ENCODE measurements at regions of chr2 and their contacts with region 1.

Region 1: DNA sequence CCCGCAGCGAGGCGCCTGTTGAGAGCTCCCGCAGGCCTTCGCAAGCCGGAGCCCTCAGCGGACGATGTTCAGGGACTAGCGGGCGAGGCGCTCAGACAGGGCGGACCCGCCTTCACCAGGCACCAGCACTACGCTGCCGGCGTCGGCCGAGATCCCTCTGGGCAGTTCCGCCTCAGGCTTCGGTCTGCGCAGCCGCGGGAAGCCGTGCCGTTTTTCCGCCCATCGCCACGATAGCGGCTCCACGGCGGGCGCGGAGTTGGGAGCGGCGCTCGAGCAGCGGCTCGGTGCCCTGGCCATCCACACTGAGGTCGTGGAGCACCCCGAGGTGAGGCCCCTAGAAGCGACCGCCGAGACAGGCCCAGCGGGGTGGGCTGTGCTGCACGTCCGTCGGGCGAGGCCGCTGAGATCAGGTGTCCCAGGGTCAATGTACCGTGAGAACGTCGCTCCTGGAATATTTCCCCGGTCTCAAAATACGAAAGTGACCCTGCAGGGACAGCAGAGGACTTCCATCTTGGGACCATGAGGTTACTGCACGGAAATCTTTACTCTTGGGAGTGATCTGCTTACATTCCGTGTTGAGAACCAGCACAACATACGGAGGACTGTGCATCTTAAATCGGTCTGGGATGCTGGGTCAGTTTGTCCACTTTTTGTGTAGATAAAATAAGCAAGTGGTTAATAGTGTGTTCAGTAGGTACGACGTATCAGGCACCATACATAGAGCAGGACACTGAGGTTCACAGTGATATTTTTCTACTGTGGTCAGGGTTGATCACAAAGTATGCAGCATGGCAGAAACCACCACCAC is 13.3 kb upstream of the MTIF2 start:
- DNase-seq: peak; percentile 77 to 93 (median 86)
- ATAC-seq: peak; percentile 98
- H3K4me3 ChIP-seq: peak overlapping the region; percentile 81
- H3K4me3 Mint-ChIP-seq: peak overlapping the region; percentile 96
- H3K27ac ChIP-seq: peak overlapping the region; percentile 78 to 88
- H3K27ac Mint-ChIP-seq: peak overlapping the region; percentile 97
- H3K4me1 ChIP-seq: peaks cover 11% of the 10 kb centered on the region
- H3K4me1 Mint-ChIP-seq: peaks cover 31% of the 10 kb centered on the region
- H3K27me3 ChIP-seq: no peaks in the 10 kb centered on the region
- H3K27me3 Mint-ChIP-seq: no peaks in the 10 kb centered on the region
- CTCF ChIP-seq: no peak

Region 2: DNA sequence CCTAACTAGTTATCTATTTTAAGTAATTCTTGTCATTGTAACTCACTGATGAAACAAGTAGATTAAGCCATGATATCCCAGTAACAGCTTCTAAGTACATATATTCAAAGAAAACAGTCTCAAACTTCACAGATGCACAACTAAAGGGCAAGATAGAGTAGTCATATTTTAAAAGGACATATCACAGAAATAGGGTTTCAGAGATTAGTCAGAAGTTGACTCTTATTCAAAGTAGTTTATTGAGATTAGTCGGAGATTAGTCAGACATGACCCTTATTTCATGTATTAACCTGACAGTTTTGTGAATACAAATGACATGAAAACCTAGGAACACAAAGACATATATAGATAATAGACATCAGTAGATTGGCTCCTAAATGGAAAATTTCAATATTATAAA is 1530.6 kb before region 1 on chr2:
- CTCF ChIA-PET with region 1: no interaction called
- POLR2A ChIA-PET with region 1: no interaction called
- intact Hi-C with region 1: no loop called
- DNase-seq: no peak
- ATAC-seq: no peak
- H3K4me3 ChIP-seq: no peak overlapping the region
- H3K4me3 Mint-ChIP-seq: no peak overlapping the region
- H3K27ac ChIP-seq: no peak overlapping the region
- H3K27ac Mint-ChIP-seq: no peak overlapping the region
- H3K4me1 ChIP-seq: no peaks in the 10 kb centered on the region
- H3K4me1 Mint-ChIP-seq: no peaks in the 10 kb centered on the region
- H3K27me3 ChIP-seq: no peaks in the 10 kb centered on the region
- H3K27me3 Mint-ChIP-seq: no peaks in the 10 kb centered on the region
- CTCF ChIP-seq: no peak

Region 3: DNA sequence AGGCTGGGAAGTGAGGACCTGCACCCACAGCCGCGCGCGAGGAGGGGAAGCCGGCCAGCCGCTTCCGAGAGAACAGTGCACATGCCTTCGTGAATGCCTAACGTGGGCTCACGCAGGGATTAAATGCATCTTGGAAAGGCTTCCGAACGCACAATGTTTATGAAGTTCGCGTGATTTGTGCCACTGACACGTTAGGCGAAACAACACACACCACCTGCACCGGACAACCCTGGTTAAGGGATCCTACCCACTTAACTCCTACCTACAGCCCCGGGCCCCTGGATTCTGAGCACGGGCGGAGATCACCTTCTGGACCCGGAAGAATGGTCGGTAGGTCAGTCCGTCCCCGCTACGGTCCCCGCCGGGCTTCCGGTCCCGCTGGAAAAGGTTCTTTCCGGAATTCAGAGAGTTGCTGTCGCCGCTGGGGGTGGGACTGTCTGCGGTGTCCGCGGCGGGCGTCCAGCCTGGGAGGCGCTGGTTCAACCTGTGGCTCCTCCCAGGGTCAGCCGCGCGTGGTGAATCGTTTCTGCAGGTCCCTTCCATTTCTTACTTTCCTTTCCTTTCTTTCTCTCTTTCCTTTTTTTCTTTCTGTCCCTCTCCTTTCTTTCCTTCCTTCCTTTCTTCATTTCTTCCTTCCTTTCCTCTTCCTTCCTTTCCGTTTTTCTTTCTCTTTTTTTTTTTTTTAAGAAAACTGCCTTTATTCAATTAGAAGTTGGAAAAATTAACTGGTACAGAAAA is 13.2 kb before region 1 on chr2 and contains the start of gene MTIF2:
- CTCF ChIA-PET with region 1: no interaction called
- POLR2A ChIA-PET with region 1: interaction called, 6 read pairs
- intact Hi-C with region 1: loop called in 1 of 2 experiments (anchors 2 kb)
- DNase-seq: peak; percentile 68 to 93 (median 82)
- ATAC-seq: peak; percentile 86
- H3K4me3 ChIP-seq: peak within 1 kb of the TSS; percentile 87
- H3K4me3 Mint-ChIP-seq: peak within 1 kb of the TSS; percentile 96
- H3K27ac ChIP-seq: peak within 1 kb of the TSS; percentile 66 to 84
- H3K27ac Mint-ChIP-seq: peak within 1 kb of the TSS; percentile 95
- H3K4me1 ChIP-seq: peaks cover 15% of the 10 kb centered on the region
- H3K4me1 Mint-ChIP-seq: peaks cover 19% of the 10 kb centered on the region
- H3K27me3 ChIP-seq: no peaks in the 10 kb centered on the region
- H3K27me3 Mint-ChIP-seq: no peaks in the 10 kb centered on the region
- CTCF ChIP-seq: no peak
- total RNA-seq, gene MTIF2: 13.0 to 15.6 TPM

Region 4: GRCh38 chr2:55550368-55551102 is 268.2 kb after region 1 on chr2:
- CTCF ChIA-PET with region 1: no interaction called
- POLR2A ChIA-PET with region 1: no interaction called
- intact Hi-C with region 1: no loop called
- DNase-seq: no peak
- ATAC-seq: no peak
- H3K4me3 ChIP-seq: no peak overlapping the region
- H3K4me3 Mint-ChIP-seq: no peak overlapping the region
- H3K27ac ChIP-seq: no peak overlapping the region
- H3K27ac Mint-ChIP-seq: peak overlapping the region; percentile 44
- H3K4me1 ChIP-seq: no peaks in the 10 kb centered on the region
- H3K4me1 Mint-ChIP-seq: no peaks in the 10 kb centered on the region
- H3K27me3 ChIP-seq: no peaks in the 10 kb centered on the region
- H3K27me3 Mint-ChIP-seq: no peaks in the 10 kb centered on the region
- CTCF ChIP-seq: no peak